Activated CD4-positive, alpha-beta memory T cell treated with anti-CD3 and anti-CD28 coated beads for 36 hours (primary cell): ENCODE measurements at regions of chr2 and their contacts with region 1.

Region 1: DNA sequence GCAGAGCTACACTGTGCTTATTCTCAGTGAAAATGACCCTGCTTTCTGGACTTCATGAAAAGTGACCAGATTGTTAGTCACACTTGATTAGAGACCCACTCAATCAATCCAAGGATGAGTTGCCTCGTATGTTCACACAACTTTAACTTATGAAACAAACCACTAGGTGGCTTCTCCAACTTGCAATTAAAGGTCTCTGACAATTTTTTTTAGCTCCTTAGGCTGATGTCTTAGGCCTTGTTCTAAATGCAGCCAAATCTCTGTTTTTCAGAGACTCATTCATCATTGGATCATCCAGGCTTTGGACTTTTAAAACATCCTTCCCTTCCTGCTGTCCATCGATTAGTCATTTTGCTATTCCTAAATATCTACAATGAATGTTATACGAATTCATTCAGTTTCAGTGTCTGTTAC is 63.4 kb downstream of the MREG start:
- DNase-seq: no peak
- H3K4me3 Mint-ChIP-seq: no peak overlapping the region
- H3K27ac Mint-ChIP-seq: no peak overlapping the region
- H3K4me1 Mint-ChIP-seq: peaks cover 3% of the 10 kb centered on the region
- H3K27me3 Mint-ChIP-seq: no peaks in the 10 kb centered on the region

Region 2: DNA sequence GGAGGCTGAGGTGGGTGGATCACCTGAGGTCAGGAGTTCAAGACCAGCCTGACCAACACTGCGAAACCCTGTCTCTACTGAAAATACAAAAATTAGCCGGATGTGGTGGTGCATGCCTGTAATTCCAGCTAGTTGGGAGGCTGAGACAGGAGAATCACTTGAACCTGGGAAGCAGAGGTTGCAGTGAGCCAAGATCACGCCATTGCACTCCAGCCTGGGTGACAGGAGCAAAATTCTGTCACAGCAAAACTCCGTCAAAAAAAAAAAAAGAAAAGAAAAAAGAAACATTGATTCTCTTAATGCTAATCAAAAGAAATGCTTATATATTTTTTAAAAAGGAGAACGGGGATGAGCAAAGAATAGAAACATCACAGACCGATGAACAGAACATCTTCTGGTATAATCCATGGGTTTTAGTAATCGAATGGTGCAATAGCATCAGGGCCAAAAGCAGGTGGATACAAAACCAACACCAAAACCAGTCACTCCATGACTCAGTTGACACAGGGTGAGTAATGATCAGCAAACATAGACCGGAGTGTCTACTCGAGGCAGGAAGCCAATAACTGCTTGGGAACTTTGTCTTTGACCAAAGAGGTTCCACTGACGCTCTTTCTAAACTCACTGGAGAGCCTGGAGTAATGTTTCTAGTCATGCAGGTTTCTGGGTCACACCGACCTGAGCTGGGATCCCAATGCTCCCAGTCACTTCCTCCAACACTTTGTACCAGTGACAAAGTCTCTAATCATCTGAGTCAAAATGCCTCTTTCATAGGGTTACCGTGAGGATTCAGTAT is 32.3 kb after region 1 on chr2:
- CTCF ChIA-PET with region 1: interaction called, 6 read pairs
- POLR2A ChIA-PET with region 1: no interaction called
- intact Hi-C with region 1: loop called (anchors 1 kb)
- DNase-seq: peak; percentile 69
- H3K4me3 Mint-ChIP-seq: no peak overlapping the region
- H3K27ac Mint-ChIP-seq: no peak overlapping the region
- H3K4me1 Mint-ChIP-seq: peaks cover 36% of the 10 kb centered on the region
- H3K27me3 Mint-ChIP-seq: no peaks in the 10 kb centered on the region

Region 3: GRCh38 chr2:216006164-216006663 is 56.2 kb after region 1 on chr2:
- CTCF ChIA-PET with region 1: interaction called, 16 read pairs
- POLR2A ChIA-PET with region 1: no interaction called
- intact Hi-C with region 1: no loop called
- DNase-seq: peak; percentile 76
- H3K4me3 Mint-ChIP-seq: peak overlapping the region; percentile 44
- H3K27ac Mint-ChIP-seq: peak overlapping the region; percentile 87
- H3K4me1 Mint-ChIP-seq: peaks cover 43% of the 10 kb centered on the region
- H3K27me3 Mint-ChIP-seq: no peaks in the 10 kb centered on the region

Region 4: GRCh38 chr2:216023055-216023648 is 73.2 kb after region 1 on chr2:
- CTCF ChIA-PET with region 1: interaction called, 188 read pairs
- POLR2A ChIA-PET with region 1: no interaction called
- intact Hi-C with region 1: loop called (anchors 1 kb)
- DNase-seq: peak; percentile 62
- H3K4me3 Mint-ChIP-seq: no peak overlapping the region
- H3K27ac Mint-ChIP-seq: no peak overlapping the region
- H3K4me1 Mint-ChIP-seq: peaks cover 7% of the 10 kb centered on the region
- H3K27me3 Mint-ChIP-seq: no peaks in the 10 kb centered on the region

Region 5: GRCh38 chr2:216242365-216242764 is 292.4 kb after region 1 on chr2:
- CTCF ChIA-PET with region 1: no interaction called
- POLR2A ChIA-PET with region 1: no interaction called
- intact Hi-C with region 1: no loop called
- DNase-seq: no peak
- H3K4me3 Mint-ChIP-seq: no peak overlapping the region
- H3K27ac Mint-ChIP-seq: no peak overlapping the region
- H3K4me1 Mint-ChIP-seq: peaks cover 2% of the 10 kb centered on the region
- H3K27me3 Mint-ChIP-seq: no peaks in the 10 kb centered on the region

Region 6: GRCh38 chr2:216666461-216667233 is 716.6 kb after region 1 on chr2:
- CTCF ChIA-PET with region 1: no interaction called
- POLR2A ChIA-PET with region 1: no interaction called
- intact Hi-C with region 1: loop called (anchors 1 kb)
- DNase-seq: peak; percentile 79
- H3K4me3 Mint-ChIP-seq: no peak overlapping the region
- H3K27ac Mint-ChIP-seq: no peak overlapping the region
- H3K4me1 Mint-ChIP-seq: no peaks in the 10 kb centered on the region
- H3K27me3 Mint-ChIP-seq: peaks cover 3% of the 10 kb centered on the region